BJ (cell line): ENCODE measurements at regions of chr2 and their contacts with region 1.

Region 1: DNA sequence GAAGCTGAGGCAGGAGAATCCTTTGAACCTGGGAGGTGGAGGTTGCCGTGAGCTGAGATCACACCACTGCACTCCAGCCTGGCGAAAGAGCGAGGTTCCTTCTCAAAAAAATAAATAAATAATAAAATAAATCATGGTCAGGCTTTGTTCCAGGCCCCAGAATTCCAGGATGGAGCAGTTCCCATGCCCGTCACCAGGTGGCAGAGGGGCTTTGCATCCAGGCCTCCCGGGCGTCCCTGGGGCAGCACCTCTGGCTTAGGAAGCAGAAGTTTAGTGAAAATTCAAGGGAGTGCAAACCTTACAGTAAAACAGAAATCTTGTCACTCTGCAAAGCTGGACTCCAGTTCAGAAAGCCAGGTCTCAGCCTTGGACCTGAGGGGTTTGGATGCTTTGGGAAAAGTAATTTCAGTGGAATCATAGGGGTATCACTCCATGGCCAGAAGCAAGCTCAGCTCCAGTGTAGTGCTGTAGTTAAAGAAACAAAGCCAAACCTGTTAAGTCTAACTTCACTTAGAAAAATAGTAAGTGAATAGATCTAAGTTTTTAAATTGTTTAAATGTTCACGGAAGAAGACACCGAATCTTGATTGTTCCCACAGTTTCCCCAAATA is 512.7 kb downstream of the CMPK2 start:
- DNase-seq: no peak
- H3K4me3 ChIP-seq: no peak overlapping the region
- H3K27me3 ChIP-seq: no peaks in the 10 kb centered on the region
- CTCF ChIP-seq: peak; percentile 93

Region 2: DNA sequence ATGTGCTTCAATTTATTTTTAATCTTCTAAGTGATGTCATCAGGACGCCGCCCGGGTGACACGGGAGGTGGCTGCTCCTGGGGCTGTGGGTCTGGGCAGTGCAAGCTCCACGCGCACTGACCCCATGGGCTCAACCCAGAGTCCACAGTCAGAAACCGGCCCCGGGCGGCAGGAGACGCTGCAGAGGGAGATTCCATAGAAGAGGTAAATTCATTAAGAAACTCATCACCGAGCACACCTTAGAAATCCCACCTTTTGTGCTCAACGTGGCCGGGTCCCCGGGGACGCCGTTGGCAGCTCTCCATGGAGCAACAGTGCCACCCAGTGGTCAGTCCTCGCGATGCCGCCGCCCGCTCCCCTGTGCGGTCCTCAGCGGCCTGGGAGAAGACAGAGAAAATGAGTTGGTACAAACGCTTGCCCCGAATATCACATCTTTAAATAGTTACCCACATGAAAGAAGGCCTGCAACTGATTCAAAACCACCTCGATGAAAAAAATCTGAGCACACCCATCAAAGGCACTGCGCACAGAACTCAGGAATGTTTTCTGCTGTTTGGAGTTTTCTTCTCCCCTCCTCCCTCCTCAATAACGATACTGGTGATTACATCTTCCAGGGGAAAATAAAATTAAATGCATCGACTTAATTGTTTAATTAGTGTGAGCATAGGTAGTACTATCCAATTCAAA is 420.1 kb after region 1 on chr2:
- CTCF ChIA-PET with region 1: interaction called, 24 read pairs
- POLR2A ChIA-PET with region 1: no interaction called
- DNase-seq: no peak
- H3K4me3 ChIP-seq: no peak overlapping the region
- H3K27me3 ChIP-seq: no peaks in the 10 kb centered on the region
- CTCF ChIP-seq: peak; percentile 96